ENCODE measurements at regions of chr5 and their contacts with region 1.

Region 1: GRCh38 chr5:132293066-132293991 is 865 bp upstream of the SLC22A4 start:
- DNase-seq: peak; percentile 91
- H3K4me3 Mint-ChIP-seq: peak overlapping the region; percentile 98
- H3K27ac Mint-ChIP-seq: peak overlapping the region; percentile 89
- H3K4me1 Mint-ChIP-seq: peaks cover 40% of the 10 kb centered on the region
- H3K27me3 Mint-ChIP-seq: no peaks in the 10 kb centered on the region
- CTCF ChIP-seq: peak; percentile 19

Region 2: DNA sequence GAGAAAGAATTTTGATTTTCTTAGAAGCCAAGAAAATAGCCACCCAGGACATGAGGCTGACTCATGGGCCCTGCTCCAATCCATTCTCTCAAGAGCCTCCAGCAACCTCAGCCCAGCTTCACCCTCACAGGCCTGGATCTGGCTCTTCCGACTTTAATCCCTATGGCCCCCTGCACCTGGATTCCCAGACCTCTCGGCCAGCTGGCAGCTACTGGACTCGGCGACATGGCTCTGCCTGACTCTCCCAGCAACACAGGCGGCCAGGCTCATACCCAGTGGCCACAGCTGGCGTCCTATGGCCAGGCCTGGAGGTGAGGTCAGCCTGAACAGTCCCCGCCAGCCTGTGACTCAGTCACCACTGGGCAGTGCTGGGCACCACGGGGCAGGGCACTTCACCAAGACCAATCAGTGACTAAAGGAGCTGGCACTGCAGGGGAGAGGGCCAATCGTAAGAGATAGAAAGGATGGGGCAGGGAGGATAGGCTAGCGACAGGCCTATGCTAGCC is 42.1 kb before region 1 on chr5:
- CTCF ChIA-PET with region 1: interaction called, 4 read pairs
- POLR2A ChIA-PET with region 1: interaction called, 21 read pairs
- intact Hi-C with region 1: no loop called
- DNase-seq: no peak
- H3K4me3 Mint-ChIP-seq: no peak overlapping the region
- H3K27ac Mint-ChIP-seq: peak overlapping the region; percentile 70
- H3K4me1 Mint-ChIP-seq: peaks cover 26% of the 10 kb centered on the region
- H3K27me3 Mint-ChIP-seq: no peaks in the 10 kb centered on the region
- CTCF ChIP-seq: no peak

Region 3: DNA sequence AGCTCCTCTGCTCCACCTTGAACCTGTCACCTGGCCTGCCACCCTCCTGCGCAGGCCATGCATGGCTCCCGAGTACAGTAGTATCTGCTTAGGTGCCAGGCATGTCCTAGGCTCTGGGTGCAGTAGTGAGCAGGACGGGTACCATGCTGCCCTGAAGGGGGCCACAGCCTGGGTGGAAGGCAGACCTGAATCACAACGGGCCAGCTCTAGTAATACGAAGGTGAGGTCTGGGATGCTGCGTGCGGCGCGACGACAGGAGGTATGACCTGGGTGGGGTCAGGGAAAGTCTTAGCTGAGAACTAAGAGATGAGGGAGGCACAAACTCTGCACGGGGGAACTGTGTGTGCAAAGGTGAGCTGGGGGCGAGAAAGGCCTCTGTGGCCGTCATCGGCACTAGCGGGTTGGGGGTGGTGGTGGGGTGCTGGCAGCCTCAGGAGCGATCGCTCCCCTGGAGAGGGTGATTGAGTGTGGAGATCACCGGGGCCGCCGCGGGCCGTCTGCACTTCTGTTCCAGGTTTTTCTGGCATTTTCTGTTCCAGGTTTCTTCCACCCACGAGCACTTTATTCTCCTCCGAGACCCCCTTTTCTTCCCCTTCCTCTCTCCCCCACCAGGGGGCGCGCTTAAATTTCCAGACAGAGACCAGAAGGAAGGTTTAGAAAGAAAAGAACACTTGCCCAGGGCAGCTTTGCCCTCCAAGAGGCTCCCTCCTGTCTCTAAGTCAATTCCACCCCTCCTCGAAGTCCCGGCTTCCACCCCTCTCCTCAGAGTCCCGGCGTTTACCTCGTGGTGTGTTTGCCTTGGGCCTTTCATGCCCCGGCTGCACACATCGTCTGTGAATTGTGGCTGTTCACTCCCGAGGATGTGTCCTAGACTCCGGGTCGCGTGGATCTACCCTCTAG is 20.8 kb before region 1 on chr5:
- CTCF ChIA-PET with region 1: interaction called, 21 read pairs
- POLR2A ChIA-PET with region 1: interaction called, 13 read pairs
- intact Hi-C with region 1: no loop called
- DNase-seq: peak; percentile 68
- H3K4me3 Mint-ChIP-seq: no peak overlapping the region
- H3K27ac Mint-ChIP-seq: no peak overlapping the region
- H3K4me1 Mint-ChIP-seq: peaks cover 2% of the 10 kb centered on the region
- H3K27me3 Mint-ChIP-seq: no peaks in the 10 kb centered on the region
- CTCF ChIP-seq: peak; percentile 96

Region 4: DNA sequence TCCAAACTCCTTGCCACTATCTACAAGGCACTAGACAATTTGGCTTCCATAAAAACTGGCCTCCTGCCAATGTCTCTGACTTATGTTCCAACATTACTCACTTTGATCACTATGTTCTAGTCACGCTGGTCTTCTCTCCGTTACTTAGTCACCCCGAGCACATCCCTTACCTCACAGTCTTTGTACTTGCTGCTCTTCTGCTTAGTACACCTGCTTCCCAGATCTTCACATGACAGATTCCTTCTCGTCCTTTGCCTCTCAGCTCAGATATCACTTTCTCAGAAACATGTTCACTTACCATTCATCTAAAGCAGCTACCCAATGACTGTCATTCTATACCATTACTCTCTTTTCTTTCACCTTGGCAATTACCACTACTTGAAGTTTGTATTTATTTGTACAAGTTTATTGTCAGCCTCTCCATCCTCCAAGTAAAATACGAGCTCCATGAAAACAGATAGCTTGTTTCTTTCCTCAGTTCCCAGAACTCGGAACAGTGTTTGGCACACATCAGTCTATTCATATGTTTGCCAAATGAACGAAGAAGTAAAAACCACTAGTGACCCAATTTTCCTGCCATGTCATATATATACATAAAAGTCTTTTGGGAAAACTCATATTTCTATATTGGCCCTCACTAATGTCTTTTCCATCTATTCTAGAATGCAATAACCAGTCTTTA is 70.2 kb after region 1 on chr5:
- CTCF ChIA-PET with region 1: interaction called, 24 read pairs
- POLR2A ChIA-PET with region 1: interaction called, 178 read pairs
- intact Hi-C with region 1: loop called (anchors 1 kb)
- DNase-seq: peak; percentile 99
- H3K4me3 Mint-ChIP-seq: peak overlapping the region; percentile 45
- H3K27ac Mint-ChIP-seq: peak overlapping the region; percentile 99
- H3K4me1 Mint-ChIP-seq: peaks cover 52% of the 10 kb centered on the region
- H3K27me3 Mint-ChIP-seq: no peaks in the 10 kb centered on the region
- CTCF ChIP-seq: no peak